ENCODE measurements at regions of chr12 and their contacts with region 1.

Region 1: GRCh38 chr12:96409731-96410130 is 9.5 kb upstream of the CDK17 start:
- DNase-seq: no peak
- H3K4me3 ChIP-seq: no peak overlapping the region
- H3K27ac ChIP-seq: no peak overlapping the region
- H3K4me1 ChIP-seq: no peaks in the 10 kb centered on the region
- H3K27me3 ChIP-seq: no peaks in the 10 kb centered on the region
- CTCF ChIP-seq: no peak
- POLR2A ChIP-seq: no peak

Region 2: DNA sequence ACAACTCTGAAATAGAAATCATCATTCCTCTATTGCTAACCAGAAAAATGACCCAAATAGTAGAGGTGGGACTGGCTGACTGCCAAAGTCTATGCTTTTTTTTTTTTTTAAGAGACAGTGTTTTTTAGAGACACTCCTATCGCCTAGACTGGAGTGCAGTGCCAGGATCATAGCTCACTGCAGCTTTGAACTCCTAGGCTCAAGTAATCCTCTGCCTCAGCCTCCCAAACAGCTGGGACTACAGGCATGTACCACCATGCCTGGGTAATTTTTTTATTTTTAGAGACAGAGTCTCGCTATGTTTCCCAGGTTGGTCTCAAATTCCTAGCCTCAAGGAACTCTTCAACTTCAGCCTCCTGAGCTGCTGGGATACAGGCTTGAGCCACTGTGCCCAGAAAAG is 1355.5 kb before region 1 on chr12:
- intact Hi-C with region 1: no loop called
- DNase-seq: no peak
- H3K4me3 ChIP-seq: no peak overlapping the region
- H3K27ac ChIP-seq: no peak overlapping the region
- H3K4me1 ChIP-seq: no peaks in the 10 kb centered on the region
- H3K27me3 ChIP-seq: no peaks in the 10 kb centered on the region
- CTCF ChIP-seq: no peak
- POLR2A ChIP-seq: no peak

Region 3: GRCh38 chr12:96365604-96366380 is 43.9 kb before region 1 on chr12:
- intact Hi-C with region 1: loop called (anchors 2 kb)
- DNase-seq: no peak
- H3K4me3 ChIP-seq: no peak overlapping the region
- H3K27ac ChIP-seq: peak overlapping the region; percentile 43 to 62
- H3K4me1 ChIP-seq: peaks cover 0 to 4% of the 10 kb centered on the region in 2 donors
- H3K27me3 ChIP-seq: no peaks in the 10 kb centered on the region
- CTCF ChIP-seq: no peak
- POLR2A ChIP-seq: no peak

Region 4: GRCh38 chr12:96514328-96514727 is 104.6 kb after region 1 on chr12:
- intact Hi-C with region 1: no loop called
- DNase-seq: no peak
- H3K4me3 ChIP-seq: no peak overlapping the region
- H3K27ac ChIP-seq: no peak overlapping the region
- H3K4me1 ChIP-seq: no peaks in the 10 kb centered on the region
- H3K27me3 ChIP-seq: no peaks in the 10 kb centered on the region
- CTCF ChIP-seq: no peak
- POLR2A ChIP-seq: no peak

Measured in breast epithelium (tissue), 4 donors.